ENCODE measurements at regions of chr4 and their contacts with region 1.

Region 1: GRCh38 chr4:141711014-141711610 is 74.7 kb downstream of the IL15 start:
- DNase-seq: no peak
- ATAC-seq: peak; percentile 78
- H3K4me3 ChIP-seq: no peak overlapping the region
- H3K27ac ChIP-seq: no peak overlapping the region
- H3K4me1 ChIP-seq: no peaks in the 10 kb centered on the region; the same call in 1 of the 2 replicates
- H3K27me3 ChIP-seq: no peaks in the 10 kb centered on the region
- CTCF ChIP-seq: peak; percentile 49 to 56 (median 54)
- EP300 ChIP-seq: no peak
- POLR2A ChIP-seq: no peak
- RAD21 ChIP-seq: peak; percentile 63

Region 2: DNA sequence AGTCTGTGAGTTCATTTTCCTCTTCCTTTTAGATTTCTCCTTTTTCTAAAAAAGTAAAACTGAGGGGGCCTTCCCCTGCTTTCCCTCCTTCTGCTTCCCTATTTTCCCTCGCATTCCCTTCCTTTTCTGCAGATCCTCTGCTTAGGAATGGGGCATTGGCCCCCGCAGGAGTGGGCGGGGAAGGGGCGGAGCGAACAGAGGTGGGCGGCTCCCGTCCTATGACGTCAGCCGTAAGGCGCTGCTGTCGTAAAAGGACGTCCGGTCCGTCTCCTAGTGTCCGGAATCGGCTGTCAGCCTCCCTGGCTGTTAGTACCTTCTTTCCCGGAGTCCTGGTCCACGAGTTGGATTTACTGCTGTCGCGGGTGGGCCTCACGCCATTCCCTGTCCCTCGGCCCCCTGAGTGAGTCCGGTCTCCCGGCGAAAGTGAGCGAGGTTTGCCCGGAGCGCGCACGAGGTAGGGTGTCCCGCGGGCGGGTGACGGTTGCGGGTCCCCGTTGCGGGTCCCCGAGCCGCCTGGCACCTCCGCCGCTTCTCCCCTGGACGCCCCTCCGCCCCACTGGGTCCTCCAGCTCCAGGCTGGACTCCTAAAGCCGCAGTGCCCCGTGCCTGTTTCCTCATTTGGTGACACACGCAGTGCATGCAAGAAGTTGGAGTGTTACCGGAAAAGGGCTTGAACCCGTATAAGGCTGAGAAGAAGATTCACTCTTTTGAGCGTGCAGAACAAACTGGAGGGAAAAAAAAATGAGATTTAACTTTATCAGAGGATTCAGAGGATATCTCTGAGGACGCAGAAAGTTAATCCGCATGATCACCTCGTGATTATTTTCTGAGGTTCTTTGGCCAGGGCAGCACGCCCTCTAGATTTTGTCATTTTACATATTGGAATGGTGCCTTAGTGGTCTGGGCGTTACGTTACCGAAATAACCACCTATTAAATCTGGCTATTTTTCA is 490.2 kb before region 1 on chr4 and contains the start of gene ZNF330:
- CTCF ChIA-PET with region 1: no interaction called
- POLR2A ChIA-PET with region 1: no interaction called
- RAD21 ChIA-PET with region 1: no interaction called
- SMC1A ChIA-PET with region 1: no interaction called
- in situ Hi-C with region 1: no loop called
- intact Hi-C with region 1: loop called (anchors 10 kb)
- DNase-seq: peak; percentile 53
- ATAC-seq: peak; percentile 93
- H3K4me3 ChIP-seq: peak within 1 kb of the TSS; percentile 91
- H3K27ac ChIP-seq: peak within 1 kb of the TSS; percentile 90
- H3K4me1 ChIP-seq: peaks cover 4% of the 10 kb centered on the region; the same call in 1 of the 2 replicates
- H3K27me3 ChIP-seq: no peaks in the 10 kb centered on the region
- CTCF ChIP-seq: peak in 2 of 3 experiments; percentile 31 to 33; a peak in 3 of 6 replicates
- EP300 ChIP-seq: 0 out of 4 replicates have a peak, but pooled peaks of 1 of the 2 experiments have one; percentile 14
- POLR2A ChIP-seq: peak; percentile 94
- RAD21 ChIP-seq: no peak
- polyA plus RNA-seq, gene ZNF330: 40.1 to 44.5 TPM

Region 3: DNA sequence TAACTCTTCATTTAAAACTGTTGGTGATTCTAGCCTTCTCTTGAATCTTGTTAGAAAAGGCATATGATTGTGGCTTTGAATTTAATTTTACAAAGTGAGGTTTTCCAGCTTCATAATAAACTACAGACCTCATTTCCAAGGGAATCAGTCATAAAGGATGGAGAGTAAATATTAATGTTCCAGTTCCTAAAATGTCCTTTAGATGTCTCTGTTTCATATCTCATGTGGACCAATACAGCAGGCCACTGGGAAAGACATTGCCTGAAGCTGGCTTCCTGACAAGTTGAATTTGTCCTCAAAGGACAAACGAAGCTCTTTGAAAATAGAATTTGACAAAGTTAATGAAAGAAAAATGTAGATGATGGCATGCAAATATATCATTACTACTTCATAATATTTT is 365.0 kb before region 1 on chr4:
- CTCF ChIA-PET with region 1: interaction called, 14 read pairs
- POLR2A ChIA-PET with region 1: no interaction called
- RAD21 ChIA-PET with region 1: interaction called, 12 read pairs
- SMC1A ChIA-PET with region 1: interaction called, 11 read pairs
- in situ Hi-C with region 1: no loop called
- intact Hi-C with region 1: loop called (anchors 1 kb)
- DNase-seq: no peak
- ATAC-seq: peak; percentile 56; the same call in 2 of the 3 replicates
- H3K4me3 ChIP-seq: no peak overlapping the region
- H3K27ac ChIP-seq: no peak overlapping the region
- H3K4me1 ChIP-seq: peaks cover 5% of the 10 kb centered on the region; the same call in 1 of the 2 replicates
- H3K27me3 ChIP-seq: no peaks in the 10 kb centered on the region
- CTCF ChIP-seq: peak; percentile 29 to 55 (median 36); a peak in 3 of 6 replicates
- EP300 ChIP-seq: no peak
- POLR2A ChIP-seq: no peak
- RAD21 ChIP-seq: peak; percentile 83

Region 4: GRCh38 chr4:141614878-141615586 is 96.1 kb before region 1 on chr4:
- CTCF ChIA-PET with region 1: no interaction called
- POLR2A ChIA-PET with region 1: no interaction called
- RAD21 ChIA-PET with region 1: no interaction called
- SMC1A ChIA-PET with region 1: no interaction called
- in situ Hi-C with region 1: no loop called
- intact Hi-C with region 1: no loop called
- DNase-seq: no peak
- ATAC-seq: no peak
- H3K4me3 ChIP-seq: no peak overlapping the region
- H3K27ac ChIP-seq: no peak overlapping the region
- H3K4me1 ChIP-seq: no peaks in the 10 kb centered on the region
- H3K27me3 ChIP-seq: no peaks in the 10 kb centered on the region
- CTCF ChIP-seq: no peak
- EP300 ChIP-seq: no peak
- POLR2A ChIP-seq: no peak
- RAD21 ChIP-seq: no peak

Region 5: GRCh38 chr4:141977433-141977832 is 266.3 kb after region 1 on chr4:
- CTCF ChIA-PET with region 1: no interaction called
- POLR2A ChIA-PET with region 1: no interaction called
- RAD21 ChIA-PET with region 1: no interaction called
- SMC1A ChIA-PET with region 1: no interaction called
- in situ Hi-C with region 1: no loop called
- intact Hi-C with region 1: no loop called
- DNase-seq: no peak
- ATAC-seq: peak; percentile 84
- H3K4me3 ChIP-seq: no peak overlapping the region
- H3K27ac ChIP-seq: no peak overlapping the region
- H3K4me1 ChIP-seq: no peaks in the 10 kb centered on the region
- H3K27me3 ChIP-seq: no peaks in the 10 kb centered on the region
- CTCF ChIP-seq: no peak
- EP300 ChIP-seq: no peak
- POLR2A ChIP-seq: no peak
- RAD21 ChIP-seq: no peak

Region 6: DNA sequence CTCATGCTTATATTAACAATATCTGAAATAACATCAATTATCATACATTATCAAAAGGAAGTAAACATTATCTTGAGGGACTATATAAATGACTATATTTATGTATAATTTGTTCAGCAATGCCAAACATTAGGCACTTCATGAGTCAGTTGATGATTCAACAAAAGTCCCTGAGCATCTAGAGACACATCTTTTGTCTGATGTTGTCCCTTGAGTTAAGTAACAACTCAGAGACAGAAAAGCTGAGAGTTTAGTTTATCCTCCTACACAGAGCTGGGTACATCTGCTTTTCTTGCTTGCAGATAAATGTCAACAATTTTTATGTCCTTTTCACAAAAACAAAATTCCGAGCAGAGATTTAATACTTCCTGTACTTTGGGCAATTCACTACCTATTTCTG is 823.9 kb after region 1 on chr4:
- CTCF ChIA-PET with region 1: no interaction called
- POLR2A ChIA-PET with region 1: no interaction called
- RAD21 ChIA-PET with region 1: no interaction called
- SMC1A ChIA-PET with region 1: no interaction called
- in situ Hi-C with region 1: no loop called
- intact Hi-C with region 1: no loop called
- DNase-seq: no peak
- ATAC-seq: peak; percentile 53
- H3K4me3 ChIP-seq: no peak overlapping the region
- H3K27ac ChIP-seq: no peak overlapping the region
- H3K4me1 ChIP-seq: no peaks in the 10 kb centered on the region
- H3K27me3 ChIP-seq: no peaks in the 10 kb centered on the region
- CTCF ChIP-seq: no peak
- EP300 ChIP-seq: no peak
- POLR2A ChIP-seq: no peak
- RAD21 ChIP-seq: no peak

Measured in GM12878 (cell line).